Right ventricle myocardium inferior (tissue), 1 donor: ENCODE measurements at regions of chr10 and their contacts with region 1.

Region 1: GRCh38 chr10:31707093-31708039 is 221.3 kb downstream of the ARHGAP12 start:
- DNase-seq: peak; percentile 83
- ATAC-seq: peak; percentile 86

Region 2: GRCh38 chr10:31581741-31582313 is 125.5 kb before region 1 on chr10:
- intact Hi-C with region 1: loop called (anchors 5 kb)
- DNase-seq: no peak
- ATAC-seq: no peak

Region 3: GRCh38 chr10:31664803-31665202 is 42.6 kb before region 1 on chr10:
- intact Hi-C with region 1: no loop called
- DNase-seq: no peak
- ATAC-seq: peak; percentile 91

Region 4: GRCh38 chr10:31759799-31760626 is 52.6 kb after region 1 on chr10:
- intact Hi-C with region 1: loop called (anchors 5 kb)
- DNase-seq: peak; percentile 98
- ATAC-seq: peak; percentile 96

Region 5: GRCh38 chr10:31770307-31770902 is 63.0 kb after region 1 on chr10:
- intact Hi-C with region 1: loop called (anchors 1 kb)
- DNase-seq: no peak
- ATAC-seq: peak; percentile 56

Region 6: DNA sequence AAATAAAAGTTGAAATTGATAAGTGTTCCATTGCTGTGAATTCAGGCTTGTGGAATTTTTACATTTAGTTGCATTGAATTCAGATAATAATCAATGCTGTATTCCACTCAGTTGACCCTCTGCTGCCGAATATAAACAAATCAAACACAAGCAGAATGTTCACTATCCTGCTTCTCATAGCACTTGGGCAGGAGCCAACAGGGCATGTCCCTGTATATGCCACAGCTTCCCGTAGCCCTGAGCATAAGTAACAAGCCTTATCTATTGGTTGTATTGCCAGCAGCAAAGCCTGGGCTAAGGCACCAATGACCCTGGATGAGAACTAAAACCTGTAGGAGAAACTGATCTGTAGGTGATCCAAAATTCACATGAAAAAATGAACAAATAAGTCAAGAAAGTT is 75.3 kb after region 1 on chr10:
- intact Hi-C with region 1: no loop called
- DNase-seq: no peak
- ATAC-seq: no peak

Region 7: DNA sequence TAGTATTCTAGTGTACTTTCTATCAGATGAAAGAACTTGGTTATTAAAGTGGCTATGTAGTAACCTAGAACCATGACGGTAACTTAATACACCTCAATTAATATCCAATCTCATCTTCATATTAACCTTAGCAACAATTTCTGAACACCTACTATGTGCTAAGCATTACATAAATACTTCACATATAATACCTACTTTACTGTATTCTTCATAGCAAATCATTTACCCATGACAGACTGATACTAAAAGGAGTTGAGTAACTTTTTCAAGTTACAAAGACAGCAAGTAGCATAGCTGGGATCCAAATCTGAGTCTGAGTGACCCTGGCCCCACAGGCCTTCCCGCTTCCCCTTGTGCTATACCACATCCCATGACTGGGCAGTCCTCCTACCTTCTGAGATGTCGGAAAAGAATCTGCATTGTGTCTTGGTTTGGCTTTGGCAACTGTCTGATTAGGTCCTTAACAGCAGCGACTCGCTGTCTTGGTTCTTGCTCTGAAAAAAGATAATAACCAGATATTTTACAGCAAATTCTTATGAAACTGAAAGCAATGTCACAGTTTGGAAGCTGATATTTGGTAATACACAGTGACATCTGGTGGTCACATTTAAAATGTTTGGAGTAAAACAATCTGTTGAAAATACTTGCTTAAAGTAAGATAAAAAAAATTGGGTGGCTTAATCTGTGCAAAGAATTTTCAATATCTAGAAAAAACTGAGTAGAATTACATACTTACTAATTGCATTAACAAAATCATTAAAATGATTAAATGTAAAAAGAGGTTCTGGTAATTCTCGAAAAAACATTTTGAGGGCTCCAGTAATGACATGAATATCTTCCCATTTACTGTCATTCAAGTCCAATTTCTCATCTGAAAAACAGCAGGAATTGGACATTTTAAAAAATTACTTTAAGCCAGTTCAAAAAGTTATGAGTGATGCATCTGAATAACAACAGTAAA is 101.2 kb after region 1 on chr10:
- intact Hi-C with region 1: loop called (anchors 2 kb)
- DNase-seq: no peak
- ATAC-seq: peak; percentile 76